Heart right ventricle (tissue), 16 donors: ENCODE measurements at regions of chr5 and their contacts with region 1.

Region 1: GRCh38 chr5:57937025-57937424 is 454.4 kb upstream of the ACTBL2 start:
- DNase-seq: no peak
- ATAC-seq: no peak
- H3K4me3 ChIP-seq: no peak overlapping the region
- H3K27ac ChIP-seq: no peak overlapping the region
- H3K4me1 ChIP-seq: no peaks in the 10 kb centered on the region
- H3K27me3 ChIP-seq: no peaks in the 10 kb centered on the region
- CTCF ChIP-seq: no peak

Region 2: GRCh38 chr5:57965351-57965750 is 28.3 kb after region 1 on chr5:
- intact Hi-C with region 1: loop called in 1 of 10 experiments (anchors 2 kb)
- DNase-seq: no peak
- ATAC-seq: no peak
- H3K4me3 ChIP-seq: no peak overlapping the region
- H3K27ac ChIP-seq: no peak overlapping the region
- H3K4me1 ChIP-seq: no peaks in the 10 kb centered on the region
- H3K27me3 ChIP-seq: no peaks in the 10 kb centered on the region
- CTCF ChIP-seq: no peak

Region 3: GRCh38 chr5:58002318-58002717 is 65.3 kb after region 1 on chr5:
- intact Hi-C with region 1: loop called in 1 of 10 experiments (anchors 10 kb)
- DNase-seq: no peak
- ATAC-seq: no peak
- H3K4me3 ChIP-seq: no peak overlapping the region
- H3K27ac ChIP-seq: no peak overlapping the region
- H3K4me1 ChIP-seq: no peaks in the 10 kb centered on the region
- H3K27me3 ChIP-seq: no peaks in the 10 kb centered on the region
- CTCF ChIP-seq: no peak

Region 4: GRCh38 chr5:58094031-58094430 is 157.0 kb after region 1 on chr5:
- intact Hi-C with region 1: no loop called
- DNase-seq: no peak
- ATAC-seq: peak in 1 of 8 donors; percentile 21
- H3K4me3 ChIP-seq: no peak overlapping the region
- H3K27ac ChIP-seq: no peak overlapping the region
- H3K4me1 ChIP-seq: peaks cover 0 to 21% (median 2%) of the 10 kb centered on the region in 9 donors
- H3K27me3 ChIP-seq: no peaks in the 10 kb centered on the region
- CTCF ChIP-seq: no peak